ENCODE measurements at regions of chr7 and their contacts with region 1.

Region 1: DNA sequence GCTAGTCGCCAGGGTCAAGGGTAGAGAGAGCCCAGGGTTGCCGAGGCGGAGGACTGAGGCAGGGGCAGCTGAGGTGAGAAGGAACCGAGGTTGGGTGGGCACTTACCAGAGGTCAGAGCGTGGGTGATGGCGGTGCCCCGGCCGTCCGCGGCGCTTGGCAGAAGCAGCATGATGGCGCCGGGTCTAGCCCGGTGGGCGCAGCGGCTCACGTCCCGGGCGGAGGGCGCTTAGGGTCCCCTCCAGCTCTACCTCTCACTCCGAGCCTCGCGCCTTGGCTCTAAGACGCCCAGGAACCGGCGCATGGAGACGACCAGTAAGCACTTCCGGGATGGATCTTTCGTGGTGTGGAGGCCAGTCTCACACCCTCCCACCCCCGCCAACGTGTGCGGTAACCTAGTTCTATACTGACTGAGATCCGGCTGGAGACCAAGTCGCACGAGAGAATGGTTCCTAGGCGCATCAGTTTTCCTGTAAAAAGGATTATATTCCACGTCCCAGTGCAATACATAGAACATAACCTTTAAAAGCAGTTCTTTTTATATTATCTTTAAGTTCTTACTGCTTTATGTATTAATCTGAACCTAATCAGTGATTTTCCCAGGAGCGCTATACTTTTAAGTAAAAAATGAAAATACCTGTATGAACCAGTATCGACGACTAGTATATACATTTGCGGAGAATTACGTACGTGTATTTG is at the start of gene DNAJC2:
- DNase-seq: peak; percentile 92 to 93
- ATAC-seq: peak; percentile 94
- H3K4me3 ChIP-seq: peak within 1 kb of the TSS; percentile 75 to 76
- H3K27ac ChIP-seq: peak within 1 kb of the TSS; percentile 23 to 48
- H3K4me1 ChIP-seq: peaks cover 0 to 7% of the 10 kb centered on the region in 2 donors
- H3K27me3 ChIP-seq: no peaks in the 10 kb centered on the region
- total RNA-seq, gene DNAJC2: 23.5 to 25.2 TPM

Region 2: DNA sequence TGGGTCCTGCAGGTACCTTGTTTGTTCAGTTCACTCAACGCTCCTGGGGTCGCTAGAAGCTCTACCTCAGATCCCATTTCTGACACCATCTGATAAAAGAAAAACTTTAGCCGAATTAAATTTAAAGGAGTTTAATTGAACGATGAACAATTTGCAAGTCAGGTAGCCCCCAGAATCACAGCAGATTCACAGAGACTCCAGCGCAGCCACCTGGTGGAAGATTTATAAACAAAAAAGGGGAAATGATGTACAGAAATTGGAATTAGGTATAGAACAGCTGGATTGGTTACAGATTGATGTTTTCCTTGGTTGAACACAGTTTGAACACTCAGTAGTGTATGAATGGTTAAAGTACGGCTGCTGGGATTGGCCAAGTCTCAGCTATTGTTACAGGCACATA is 293.1 kb before region 1 on chr7:
- intact Hi-C with region 1: no loop called
- DNase-seq: no peak
- ATAC-seq: no peak
- H3K4me3 ChIP-seq: no peak overlapping the region
- H3K27ac ChIP-seq: no peak overlapping the region
- H3K4me1 ChIP-seq: no peaks in the 10 kb centered on the region
- H3K27me3 ChIP-seq: no peaks in the 10 kb centered on the region

Region 3: GRCh38 chr7:103065667-103066066 is 278.9 kb before region 1 on chr7:
- intact Hi-C with region 1: no loop called
- DNase-seq: peak; percentile 58 to 75
- ATAC-seq: peak; percentile 42
- H3K4me3 ChIP-seq: no peak overlapping the region
- H3K27ac ChIP-seq: no peak overlapping the region
- H3K4me1 ChIP-seq: no peaks in the 10 kb centered on the region
- H3K27me3 ChIP-seq: no peaks in the 10 kb centered on the region

Region 4: GRCh38 chr7:103296901-103297836 is 47.4 kb before region 1 on chr7 and contains the start of gene PMPCB:
- intact Hi-C with region 1: loop called in 1 of 2 experiments (anchors 5 kb)
- DNase-seq: peak; percentile 97 to 99
- ATAC-seq: peak; percentile 99
- H3K4me3 ChIP-seq: peak within 1 kb of the TSS; percentile 70 to 76
- H3K27ac ChIP-seq: peak within 1 kb of the TSS in 1 of 2 donors; percentile 23
- H3K4me1 ChIP-seq: peaks cover 0 to 4% of the 10 kb centered on the region in 2 donors
- H3K27me3 ChIP-seq: no peaks in the 10 kb centered on the region
- total RNA-seq, gene PMPCB: 40.9 to 47.7 TPM

Measured in aorta (tissue), 5 donors.